ENCODE measurements at regions of chr11 and their contacts with region 1.

Region 1: DNA sequence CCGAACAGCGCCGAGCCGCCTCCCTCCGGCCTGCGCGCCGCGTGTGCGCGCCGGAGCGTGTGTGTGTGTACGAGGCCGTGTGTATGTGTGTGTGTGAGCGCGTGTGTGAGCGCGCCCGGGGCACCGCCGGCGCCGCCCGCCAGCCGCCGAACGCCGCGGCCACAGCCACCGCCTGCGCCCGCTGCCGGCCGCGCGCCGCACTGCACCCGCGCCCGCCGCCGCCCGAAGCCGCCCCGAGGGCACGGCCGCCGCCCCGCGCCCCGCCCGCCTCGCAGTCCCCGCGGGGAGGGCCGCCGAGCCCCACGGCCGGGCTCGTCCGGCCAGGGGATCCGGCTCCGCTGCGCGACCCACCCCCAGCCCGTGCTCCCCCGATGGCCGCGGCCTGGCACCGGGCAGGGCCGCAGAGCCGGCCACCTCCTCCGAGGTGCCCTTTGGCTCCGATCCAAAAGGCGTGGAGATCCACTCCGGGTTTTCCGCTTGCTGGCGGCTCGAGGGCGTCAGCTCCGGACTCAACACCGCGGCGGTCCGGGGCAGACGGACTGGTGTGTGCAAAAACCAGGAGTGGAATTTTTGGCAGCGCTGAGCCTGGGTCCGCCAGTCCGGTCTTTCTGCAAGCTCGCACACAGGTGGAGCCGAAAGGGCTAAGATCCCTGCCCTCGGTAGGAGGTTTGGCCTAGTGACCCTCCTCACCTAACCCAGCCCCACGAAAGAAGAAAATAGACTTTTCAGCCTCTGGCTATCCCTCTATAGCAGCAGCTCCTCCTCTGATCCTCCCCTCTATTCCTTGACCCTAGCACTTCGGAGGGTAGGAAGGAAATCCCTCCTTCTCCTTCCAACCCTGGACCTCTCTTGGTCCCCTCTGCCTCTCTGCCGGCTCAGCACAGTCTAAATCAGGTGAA is at the start of gene SYT7:
- DNase-seq: peak; percentile 97
- H3K4me3 ChIP-seq: peak within 1 kb of the TSS; percentile 53 to 57; a peak in 3 of 4 replicates
- H3K27ac ChIP-seq: peak within 1 kb of the TSS in 1 of 2 experiments; percentile 85; a peak in 2 of 4 replicates
- H3K4me1 ChIP-seq: peaks cover 0 to 45% of the 10 kb centered on the region in 2 experiments; a peak in 1 of 4 replicates
- H3K27me3 ChIP-seq: peaks cover 37% of the 10 kb centered on the region
- CTCF ChIP-seq: 0 out of 2 replicates have a peak, but pooled peaks have one; percentile 15
- EP300 ChIP-seq: no peak
- RAD21 ChIP-seq: peak; percentile 18; the same call in 1 of the 2 replicates
- polyA plus RNA-seq, gene SYT7: 1.1 and 1.4 TPM in 2 replicates

Region 2: GRCh38 chr11:61477727-61478148 is 103.5 kb before region 1 on chr11:
- CTCF ChIA-PET with region 1: interaction called, 156 read pairs
- POLR2A ChIA-PET with region 1: no interaction called
- DNase-seq: peak; percentile 89
- H3K4me3 ChIP-seq: no peak overlapping the region; a peak in 1 of 4 replicates
- H3K27ac ChIP-seq: no peak overlapping the region
- H3K4me1 ChIP-seq: peaks cover 0 to 12% of the 10 kb centered on the region in 2 experiments; a peak in 1 of 4 replicates
- H3K27me3 ChIP-seq: no peaks in the 10 kb centered on the region
- CTCF ChIP-seq: peak; percentile 92
- EP300 ChIP-seq: no peak
- RAD21 ChIP-seq: peak; percentile 88

Region 3: DNA sequence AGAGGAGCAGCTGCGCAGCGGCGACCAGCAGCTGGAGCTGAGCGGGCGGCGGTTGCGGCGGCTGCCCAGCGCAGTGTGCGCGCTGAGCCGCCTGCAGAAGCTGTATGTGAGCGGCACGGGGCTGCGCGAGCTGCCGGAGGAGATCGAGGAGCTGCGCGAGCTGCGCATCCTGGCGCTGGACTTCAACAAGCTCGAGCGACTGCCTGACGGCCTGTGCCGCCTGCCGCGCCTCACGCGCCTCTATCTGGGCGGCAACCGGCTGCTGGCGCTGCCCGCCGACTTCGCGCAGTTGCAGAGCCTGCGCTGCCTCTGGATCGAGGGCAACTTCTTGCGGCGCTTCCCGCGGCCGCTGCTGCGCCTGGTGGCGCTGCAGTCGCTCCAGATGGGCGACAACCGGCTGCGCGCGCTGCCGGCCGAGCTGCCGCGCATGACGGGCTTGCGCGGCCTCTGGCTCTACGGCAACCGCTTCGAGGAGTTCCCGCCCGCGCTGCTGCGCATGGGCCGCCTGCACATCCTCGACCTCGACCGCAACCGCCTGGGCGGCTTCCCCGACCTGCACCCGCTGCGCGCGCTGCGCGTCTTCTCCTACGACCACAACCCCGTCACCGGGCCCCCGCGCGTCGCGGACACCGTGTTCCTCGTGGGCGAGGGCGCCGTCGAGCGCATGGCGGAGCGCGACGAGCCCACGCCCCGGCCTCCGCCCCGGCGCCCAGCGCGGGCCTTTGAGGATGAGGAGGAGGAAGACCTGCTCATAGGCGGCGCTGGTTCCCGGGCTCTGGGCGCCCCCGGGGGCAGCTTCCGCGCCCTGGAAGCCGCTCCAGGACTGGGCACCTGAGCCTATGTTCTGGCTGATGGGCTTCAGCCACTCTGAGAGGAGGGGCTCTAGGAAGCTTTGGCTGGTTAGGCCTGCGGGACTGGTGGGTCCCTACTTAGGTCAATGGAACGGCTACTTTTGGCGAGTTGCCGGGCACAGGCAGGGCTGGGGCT is 71.9 kb before region 1 on chr11:
- CTCF ChIA-PET with region 1: interaction called, 404 read pairs
- POLR2A ChIA-PET with region 1: interaction called, 3 read pairs
- DNase-seq: peak; percentile 92
- H3K4me3 ChIP-seq: peak overlapping the region in 1 of 2 experiments; percentile 29; a peak in 2 of 4 replicates
- H3K27ac ChIP-seq: no peak overlapping the region; a peak in 1 of 4 replicates
- H3K4me1 ChIP-seq: peaks cover 0 to 49% of the 10 kb centered on the region in 2 experiments; a peak in 3 of 4 replicates
- H3K27me3 ChIP-seq: peaks cover 32% of the 10 kb centered on the region
- CTCF ChIP-seq: peak; percentile 36; the same call in 1 of the 2 replicates
- EP300 ChIP-seq: no peak
- RAD21 ChIP-seq: peak; percentile 54

Region 4: GRCh38 chr11:61532139-61533038 is 48.9 kb before region 1 on chr11:
- CTCF ChIA-PET with region 1: interaction called, 52 read pairs
- POLR2A ChIA-PET with region 1: interaction called, 5 read pairs
- DNase-seq: peak; percentile 69
- H3K4me3 ChIP-seq: no peak overlapping the region; a peak in 1 of 4 replicates
- H3K27ac ChIP-seq: peak overlapping the region in 1 of 2 experiments; percentile 91; a peak in 2 of 4 replicates
- H3K4me1 ChIP-seq: peaks cover 0 to 100% of the 10 kb centered on the region in 2 experiments; a peak in 2 of 4 replicates
- H3K27me3 ChIP-seq: no peaks in the 10 kb centered on the region
- CTCF ChIP-seq: peak; percentile 76
- EP300 ChIP-seq: no peak
- RAD21 ChIP-seq: peak; percentile 42

Region 5: GRCh38 chr11:61555051-61555969 is 26.0 kb before region 1 on chr11:
- CTCF ChIA-PET with region 1: interaction called, 14 read pairs
- POLR2A ChIA-PET with region 1: no interaction called
- DNase-seq: peak; percentile 90
- H3K4me3 ChIP-seq: peak overlapping the region in 1 of 2 experiments; percentile 1; a peak in 1 of 4 replicates
- H3K27ac ChIP-seq: peak overlapping the region in 1 of 2 experiments; percentile 67; a peak in 2 of 4 replicates
- H3K4me1 ChIP-seq: peaks cover 0 to 65% of the 10 kb centered on the region in 2 experiments; a peak in 1 of 4 replicates
- H3K27me3 ChIP-seq: peaks cover 37% of the 10 kb centered on the region
- CTCF ChIP-seq: peak; percentile 34
- EP300 ChIP-seq: no peak
- RAD21 ChIP-seq: no peak

Region 6: DNA sequence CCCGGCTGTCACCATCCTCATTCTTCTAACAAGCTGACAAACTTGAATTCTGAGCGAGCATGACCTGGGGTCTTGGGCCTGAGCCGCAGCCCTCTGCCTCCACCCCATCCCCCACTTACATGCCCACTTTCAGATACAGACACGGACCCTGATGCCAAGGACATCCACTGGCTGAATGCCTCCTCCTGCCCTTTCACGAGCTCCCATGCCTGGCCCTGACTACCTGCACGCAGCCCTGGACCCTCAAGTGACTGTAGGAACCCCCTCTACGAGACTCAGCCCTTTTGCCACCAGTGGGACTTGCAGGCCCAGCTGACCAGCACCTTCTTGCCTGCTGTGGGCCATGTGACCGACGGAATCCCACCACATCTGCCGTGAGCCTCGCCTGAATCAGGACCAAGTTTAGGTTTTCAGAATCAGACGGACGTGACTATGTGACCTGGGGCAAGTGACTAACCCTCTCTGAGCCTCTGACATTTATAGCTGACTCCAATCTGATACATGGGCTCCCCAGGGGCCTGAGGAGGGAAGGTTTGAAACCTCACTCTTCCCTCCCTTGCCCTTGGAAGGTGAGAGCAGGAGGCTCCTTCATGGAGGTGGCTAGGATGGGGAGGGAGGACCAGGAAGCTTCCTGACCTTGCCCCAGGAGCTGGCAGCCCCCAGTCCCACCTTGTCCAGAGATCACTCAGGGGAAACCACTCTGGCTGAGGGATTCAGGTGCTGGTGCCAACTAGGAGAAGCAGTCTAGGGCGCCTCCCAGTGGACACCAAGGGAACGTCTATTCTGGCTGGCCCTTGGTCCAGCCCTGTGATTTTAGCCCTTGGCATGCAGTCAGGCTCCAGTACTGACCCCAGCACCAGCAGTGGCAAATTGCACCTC is 46.5 kb after region 1 on chr11:
- CTCF ChIA-PET with region 1: interaction called, 96 read pairs
- POLR2A ChIA-PET with region 1: no interaction called
- DNase-seq: peak; percentile 83
- H3K4me3 ChIP-seq: no peak overlapping the region; a peak in 1 of 4 replicates
- H3K27ac ChIP-seq: no peak overlapping the region; a peak in 1 of 4 replicates
- H3K4me1 ChIP-seq: peaks cover 0 to 15% of the 10 kb centered on the region in 2 experiments; a peak in 1 of 4 replicates
- H3K27me3 ChIP-seq: no peaks in the 10 kb centered on the region; the same call in 1 of the 2 replicates
- CTCF ChIP-seq: peak; percentile 87
- EP300 ChIP-seq: 0 out of 4 replicates have a peak, but pooled peaks of 1 of the 2 experiments have one; percentile 28
- RAD21 ChIP-seq: peak; percentile 94

Measured in SK-N-SH (cell line).